ENCODE measurements at regions of chr2 and their contacts with region 1.

Region 1: GRCh38 chr2:238288650-238289573 is 502 bp upstream of the PER2 start:
- DNase-seq: peak; percentile 98
- H3K4me3 Mint-ChIP-seq: peak overlapping the region; percentile 85
- H3K27ac Mint-ChIP-seq: peak overlapping the region; percentile 72
- H3K4me1 Mint-ChIP-seq: peaks cover 33% of the 10 kb centered on the region
- H3K27me3 Mint-ChIP-seq: no peaks in the 10 kb centered on the region

Region 2: DNA sequence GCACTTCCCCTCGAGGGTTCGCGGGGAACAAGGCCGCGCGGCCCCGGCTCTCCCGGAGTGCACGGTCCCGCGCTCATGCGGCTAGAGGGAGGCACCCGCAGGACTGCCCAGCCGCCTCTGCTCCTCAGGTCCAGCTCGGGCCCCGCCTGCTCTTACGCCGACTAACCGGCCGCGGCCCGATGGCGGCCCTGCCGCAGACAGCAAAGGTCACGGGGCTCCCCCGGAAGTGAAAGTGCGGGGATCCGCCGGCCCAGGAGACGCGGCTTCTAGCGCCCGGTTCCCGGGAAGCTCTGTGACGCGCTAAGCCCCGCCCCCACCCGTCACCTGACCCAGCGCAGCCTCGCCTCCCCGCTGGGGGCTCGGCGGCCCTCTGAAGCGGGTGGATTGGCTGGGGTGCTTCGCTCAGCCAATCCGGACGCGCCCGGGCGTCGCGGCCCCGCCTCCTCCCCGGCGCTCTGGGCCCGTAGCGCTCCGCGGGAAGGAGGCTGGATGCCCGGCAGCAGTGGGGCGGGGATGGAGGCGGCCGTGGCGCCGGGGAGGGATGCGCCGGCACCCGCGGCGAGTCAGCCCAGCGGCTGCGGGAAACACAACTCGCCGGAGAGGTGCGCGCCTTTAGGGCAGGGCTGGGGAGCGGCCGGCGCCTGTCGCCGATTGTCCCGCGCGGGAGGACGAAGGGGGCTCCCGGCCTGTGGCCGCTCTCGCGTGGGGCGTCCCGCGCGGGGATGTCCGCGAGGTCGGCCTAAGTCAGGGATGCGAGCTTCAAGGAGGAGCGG is 228.2 kb before region 1 on chr2 and contains the start of gene SCLY:
- CTCF ChIA-PET with region 1: no interaction called
- POLR2A ChIA-PET with region 1: interaction called, 4 read pairs
- intact Hi-C with region 1: loop called (anchors 10 kb)
- DNase-seq: peak; percentile 98
- H3K4me3 Mint-ChIP-seq: peak within 1 kb of the TSS; percentile 91
- H3K27ac Mint-ChIP-seq: peak within 1 kb of the TSS; percentile 85
- H3K4me1 Mint-ChIP-seq: peaks cover 47% of the 10 kb centered on the region
- H3K27me3 Mint-ChIP-seq: peaks cover 8% of the 10 kb centered on the region
- total RNA-seq, gene SCLY: 47.9 to 51.8 TPM

Region 3: GRCh38 chr2:238256594-238257104 is 32.3 kb before region 1 on chr2:
- CTCF ChIA-PET with region 1: interaction called, 7 read pairs
- POLR2A ChIA-PET with region 1: no interaction called
- intact Hi-C with region 1: loop called (anchors 2 kb)
- DNase-seq: peak; percentile 83
- H3K4me3 Mint-ChIP-seq: no peak overlapping the region
- H3K27ac Mint-ChIP-seq: no peak overlapping the region
- H3K4me1 Mint-ChIP-seq: peaks cover 4% of the 10 kb centered on the region
- H3K27me3 Mint-ChIP-seq: no peaks in the 10 kb centered on the region

Region 4: DNA sequence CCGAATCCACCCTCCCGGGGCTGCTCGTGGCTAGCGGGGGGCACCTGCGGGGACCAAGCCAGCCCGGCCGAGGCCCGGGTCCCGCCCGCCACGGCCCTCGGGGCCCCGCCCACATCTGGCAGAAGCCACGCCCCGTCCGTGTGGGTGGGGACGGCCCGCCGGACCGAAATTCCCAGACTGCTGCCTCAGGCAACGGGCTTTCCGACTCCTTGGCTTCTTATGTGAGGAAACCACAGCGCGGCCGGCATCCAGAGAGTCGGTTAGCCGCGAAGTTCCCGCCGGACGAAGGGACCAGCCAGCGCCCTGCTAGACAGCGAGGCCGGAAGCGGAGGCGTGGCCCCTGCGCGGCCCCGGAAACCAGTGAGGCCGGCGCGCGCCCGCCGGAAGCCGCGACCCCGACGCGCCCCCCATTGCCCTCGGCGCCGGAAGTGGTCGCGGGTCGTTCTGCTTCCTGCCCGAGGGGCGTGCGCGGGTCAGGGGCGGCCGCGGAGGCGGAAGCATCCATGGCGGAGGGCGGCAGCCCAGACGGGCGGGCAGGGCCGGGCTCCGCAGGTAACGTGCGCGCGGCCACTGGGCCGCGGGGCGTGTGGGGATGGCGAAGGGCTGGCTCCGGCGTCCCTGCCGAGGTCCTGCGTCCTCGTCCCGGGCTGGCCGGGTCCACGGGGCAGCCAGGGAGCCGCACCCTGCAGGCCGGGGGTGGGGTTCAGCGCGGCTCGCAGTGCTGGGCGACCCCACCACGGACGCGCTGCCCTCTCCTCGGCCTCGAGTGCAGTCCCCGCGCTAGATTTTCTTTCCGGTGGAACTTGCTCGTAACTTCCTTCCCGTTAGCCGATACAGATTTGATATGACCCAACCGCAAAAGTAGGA is 137.9 kb after region 1 on chr2 and contains the start of gene ASB1:
- CTCF ChIA-PET with region 1: no interaction called
- POLR2A ChIA-PET with region 1: no interaction called
- intact Hi-C with region 1: loop called (anchors 1 kb)
- DNase-seq: peak; percentile 86
- H3K4me3 Mint-ChIP-seq: peak within 1 kb of the TSS; percentile 90
- H3K27ac Mint-ChIP-seq: peak within 1 kb of the TSS; percentile 92
- H3K4me1 Mint-ChIP-seq: peaks cover 38% of the 10 kb centered on the region
- H3K27me3 Mint-ChIP-seq: no peaks in the 10 kb centered on the region
- total RNA-seq, gene ASB1: 34.6 to 38.8 TPM